AG04449 (cell line): ENCODE measurements at regions of chr5 and their contacts with region 1.

Region 1: GRCh38 chr5:35651002-35651756 is 33.5 kb downstream of the SPEF2 start:
- DNase-seq: no peak
- H3K4me3 ChIP-seq: no peak overlapping the region
- CTCF ChIP-seq: peak; percentile 75

Region 2: GRCh38 chr5:35487233-35488025 is 163.8 kb before region 1 on chr5:
- CTCF ChIA-PET with region 1: no interaction called
- POLR2A ChIA-PET with region 1: no interaction called
- DNase-seq: no peak
- H3K4me3 ChIP-seq: no peak overlapping the region
- CTCF ChIP-seq: no peak

Region 3: GRCh38 chr5:35617435-35618303 is 33.5 kb before region 1 on chr5 and contains the start of gene SPEF2:
- CTCF ChIA-PET with region 1: interaction called, 12 read pairs
- POLR2A ChIA-PET with region 1: no interaction called
- DNase-seq: peak; percentile 55
- H3K4me3 ChIP-seq: peak within 1 kb of the TSS; percentile 88
- CTCF ChIP-seq: peak; percentile 93

Region 4: GRCh38 chr5:35626108-35626507 is 25.1 kb before region 1 on chr5:
- CTCF ChIA-PET with region 1: interaction called, 29 read pairs
- POLR2A ChIA-PET with region 1: no interaction called
- DNase-seq: peak; percentile 17
- H3K4me3 ChIP-seq: no peak overlapping the region
- CTCF ChIP-seq: no peak

Region 5: GRCh38 chr5:35920890-35921289 is 269.7 kb after region 1 on chr5:
- CTCF ChIA-PET with region 1: interaction called, 386 read pairs
- POLR2A ChIA-PET with region 1: no interaction called
- DNase-seq: no peak
- H3K4me3 ChIP-seq: no peak overlapping the region
- CTCF ChIP-seq: peak; percentile 36